Caco-2 (cell line): ENCODE measurements at regions of chr1 and their contacts with region 1.

Region 1: GRCh38 chr1:226255380-226255779 is 31.9 kb downstream of the MIXL1 start:
- DNase-seq: no peak
- H3K4me3 ChIP-seq: no peak overlapping the region
- H3K4me3 Mint-ChIP-seq: no peak overlapping the region
- H3K27ac Mint-ChIP-seq: no peak overlapping the region
- H3K4me1 ChIP-seq: no peaks in the 10 kb centered on the region
- H3K4me1 Mint-ChIP-seq: no peaks in the 10 kb centered on the region
- H3K27me3 ChIP-seq: no peaks in the 10 kb centered on the region
- H3K27me3 Mint-ChIP-seq: no peaks in the 10 kb centered on the region
- CTCF ChIP-seq: no peak

Region 2: GRCh38 chr1:226019572-226019971 is 235.8 kb before region 1 on chr1:
- CTCF ChIA-PET with region 1: no interaction called
- POLR2A ChIA-PET with region 1: no interaction called
- intact Hi-C with region 1: no loop called
- DNase-seq: no peak
- H3K4me3 ChIP-seq: no peak overlapping the region
- H3K4me3 Mint-ChIP-seq: no peak overlapping the region
- H3K27ac Mint-ChIP-seq: no peak overlapping the region
- H3K4me1 ChIP-seq: no peaks in the 10 kb centered on the region
- H3K4me1 Mint-ChIP-seq: peaks cover 6% of the 10 kb centered on the region
- H3K27me3 ChIP-seq: no peaks in the 10 kb centered on the region
- H3K27me3 Mint-ChIP-seq: no peaks in the 10 kb centered on the region
- CTCF ChIP-seq: no peak

Region 3: GRCh38 chr1:226207048-226207447 is 48.3 kb before region 1 on chr1:
- CTCF ChIA-PET with region 1: no interaction called
- POLR2A ChIA-PET with region 1: no interaction called
- intact Hi-C with region 1: loop called (anchors 2 kb)
- DNase-seq: no peak
- H3K4me3 ChIP-seq: no peak overlapping the region
- H3K4me3 Mint-ChIP-seq: no peak overlapping the region
- H3K27ac Mint-ChIP-seq: no peak overlapping the region
- H3K4me1 ChIP-seq: no peaks in the 10 kb centered on the region
- H3K4me1 Mint-ChIP-seq: no peaks in the 10 kb centered on the region
- H3K27me3 ChIP-seq: no peaks in the 10 kb centered on the region
- H3K27me3 Mint-ChIP-seq: no peaks in the 10 kb centered on the region
- CTCF ChIP-seq: no peak